Right ventricle myocardium inferior (tissue), 1 donor: ENCODE measurements at regions of chr18 and their contacts with region 1.

Region 1: DNA sequence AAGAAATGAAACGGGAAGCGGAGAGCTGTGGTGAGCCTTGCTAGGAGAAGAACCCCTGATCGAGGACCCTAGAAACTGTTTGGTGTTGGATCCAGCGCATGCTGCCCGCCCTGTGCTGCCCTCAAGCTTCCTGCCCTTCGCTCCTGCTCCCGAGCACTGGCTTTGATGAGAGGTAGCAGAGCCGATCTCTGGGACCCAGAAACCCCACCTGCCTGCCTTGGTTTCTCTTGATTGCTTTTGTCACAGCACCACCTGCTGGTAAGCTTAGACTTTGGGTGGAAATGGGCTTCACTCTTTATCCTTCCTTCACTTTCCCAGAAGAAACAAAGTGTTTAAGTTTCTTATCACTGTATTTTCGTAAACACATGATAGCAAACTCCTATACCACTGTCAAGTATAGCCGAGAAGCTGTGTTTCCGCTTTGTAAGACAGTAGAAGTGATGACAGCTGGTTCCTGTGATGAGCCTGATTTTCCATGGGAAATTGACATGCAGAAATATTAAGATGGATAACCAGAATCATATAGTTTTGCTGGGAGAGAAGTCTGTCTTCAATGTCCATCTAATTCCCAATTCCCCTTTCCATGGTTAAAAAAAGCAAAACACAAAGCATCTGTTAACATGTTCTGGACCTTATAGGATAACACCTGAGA is 267.4 kb downstream of the PHLPP1 start:
- DNase-seq: no peak
- ATAC-seq: peak; percentile 80

Region 2: GRCh38 chr18:62224229-62224628 is 758.5 kb before region 1 on chr18:
- intact Hi-C with region 1: no loop called
- DNase-seq: no peak
- ATAC-seq: no peak

Region 3: GRCh38 chr18:62425465-62426195 is 557.1 kb before region 1 on chr18:
- intact Hi-C with region 1: loop called (anchors 2 kb)
- DNase-seq: no peak
- ATAC-seq: peak; percentile 93

Region 4: GRCh38 chr18:62590799-62591590 is 391.7 kb before region 1 on chr18:
- intact Hi-C with region 1: loop called (anchors 1 kb)
- DNase-seq: no peak
- ATAC-seq: no peak

Region 5: DNA sequence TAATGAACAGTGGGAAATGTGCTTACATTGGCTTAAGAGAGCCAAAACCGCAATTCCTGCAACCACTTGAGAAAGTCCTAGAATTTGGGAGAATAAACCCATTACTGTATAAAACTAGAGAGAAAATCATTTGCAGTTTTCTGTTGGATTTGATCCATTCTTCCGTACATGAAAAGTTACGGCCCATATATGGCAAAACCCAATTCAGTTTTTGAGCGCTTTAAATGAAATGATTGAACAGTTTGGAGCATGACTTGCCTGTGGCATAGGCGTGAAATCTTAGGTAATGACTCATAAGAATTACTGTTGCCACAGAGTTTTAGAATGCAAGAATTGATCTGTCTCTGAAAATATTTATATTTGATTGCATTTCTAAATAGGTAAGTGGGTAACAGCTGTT is 215.4 kb before region 1 on chr18:
- intact Hi-C with region 1: no loop called
- DNase-seq: no peak
- ATAC-seq: no peak